K562 (cell line): ENCODE measurements at regions of chr6 and their contacts with region 1.

Region 1: DNA sequence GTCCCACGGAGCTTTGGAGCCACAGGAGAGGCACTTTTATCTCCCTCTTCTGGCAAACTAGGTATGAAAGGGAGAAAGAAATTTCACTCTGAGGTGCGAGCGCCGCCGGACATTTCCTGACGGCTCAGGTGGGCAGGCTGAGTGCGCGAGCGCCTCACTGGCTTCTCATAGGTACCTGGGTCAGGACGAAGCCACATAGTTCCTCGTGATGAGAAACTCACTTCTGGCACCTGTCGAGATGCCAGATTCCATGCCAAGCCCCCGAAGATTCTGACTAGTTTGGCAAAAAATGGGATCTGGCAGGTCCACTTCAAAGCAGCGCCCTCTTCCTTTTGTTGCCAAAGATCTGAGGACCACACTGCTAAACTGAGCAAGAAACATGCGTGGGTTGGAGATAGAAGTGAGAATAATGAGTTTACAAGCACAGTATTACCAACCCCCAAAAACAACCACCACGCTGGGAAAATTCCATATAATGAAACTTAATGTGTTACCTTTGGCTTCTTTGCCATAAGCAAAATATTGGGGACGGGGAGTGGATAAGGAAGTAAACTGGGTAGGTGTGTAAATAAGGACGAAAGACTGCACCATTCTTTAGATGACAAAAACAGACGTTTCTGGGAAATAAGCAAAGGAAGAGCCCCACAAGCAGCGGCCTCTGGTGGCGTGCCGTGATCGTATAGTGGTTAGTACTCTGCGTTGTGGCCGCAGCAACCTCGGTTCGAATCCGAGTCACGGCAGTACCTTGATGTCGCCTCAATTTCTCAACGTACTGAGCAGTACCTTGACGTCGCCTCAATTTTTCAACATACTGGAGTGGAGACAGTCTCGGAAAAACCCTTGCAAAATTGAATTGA is 89.8 kb upstream of the PRSS16 start:
- DNase-seq: peak; percentile 63 to 93 (median 70)
- ATAC-seq: peak; percentile 87
- H3K4me3 ChIP-seq: peak overlapping the region; percentile 54
- H3K27ac ChIP-seq: peak overlapping the region; percentile 46
- H3K4me1 ChIP-seq: peaks cover 10% of the 10 kb centered on the region in 2 experiments; a peak in 3 of 5 replicates
- H3K27me3 ChIP-seq: no peaks in the 10 kb centered on the region
- CTCF ChIP-seq: peak; percentile 73 to 77 (median 75)
- EP300 ChIP-seq: peak; percentile 49
- POLR2A ChIP-seq: 0 out of 2 replicates have a peak, but pooled peaks have one; percentile 12
- RAD21 ChIP-seq: peak; percentile 71 to 76

Region 2: DNA sequence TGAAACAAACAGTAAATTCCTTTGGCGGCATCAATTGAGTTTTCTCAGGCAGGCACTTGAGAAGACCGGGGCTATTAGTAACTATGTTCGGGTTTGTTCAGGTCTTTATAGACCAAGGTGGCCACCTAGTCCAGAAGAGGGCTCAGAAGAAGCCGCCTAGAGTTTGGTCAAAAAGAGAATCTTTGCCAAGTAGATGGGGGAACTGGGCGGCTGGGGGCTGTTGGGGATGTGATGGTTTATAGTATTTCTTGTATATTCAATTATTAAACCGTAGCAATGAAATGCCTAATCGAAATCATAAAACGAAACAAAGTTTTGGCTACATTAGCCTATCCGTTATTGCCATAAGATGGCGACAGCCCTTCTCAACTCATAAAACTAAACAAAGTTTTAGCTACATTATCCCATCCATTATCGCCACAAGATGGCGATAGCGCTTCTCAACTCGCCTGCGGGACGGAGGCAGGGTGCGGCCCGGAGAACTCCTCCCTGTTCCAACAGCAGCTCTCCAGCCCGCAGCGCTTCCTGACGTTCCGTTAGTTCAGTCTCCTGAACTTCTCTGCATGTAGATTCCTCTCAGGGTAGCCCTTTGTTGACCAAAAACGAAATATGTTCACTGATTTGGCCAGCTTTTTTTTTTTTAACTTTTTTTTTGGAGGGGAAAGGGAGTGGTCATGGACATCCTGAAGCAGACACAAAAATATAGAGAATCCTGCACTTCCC is 30.7 kb before region 1 on chr6:
- CTCF ChIA-PET with region 1: interaction called, 16 read pairs
- POLR2A ChIA-PET with region 1: interaction called, 6 read pairs
- in situ Hi-C with region 1: no loop called
- intact Hi-C with region 1: loop called (anchors 1 kb)
- DNase-seq: peak; percentile 76 to 97 (median 78)
- ATAC-seq: peak; percentile 77
- H3K4me3 ChIP-seq: peak overlapping the region; percentile 26
- H3K27ac ChIP-seq: peak overlapping the region; percentile 66
- H3K4me1 ChIP-seq: peaks cover 0 to 3% of the 10 kb centered on the region in 2 experiments; a peak in 2 of 5 replicates
- H3K27me3 ChIP-seq: no peaks in the 10 kb centered on the region
- CTCF ChIP-seq: peak; percentile 95 to 99 (median 97)
- EP300 ChIP-seq: no peak
- POLR2A ChIP-seq: peak; percentile 52; the same call in 1 of the 2 replicates
- RAD21 ChIP-seq: peak; percentile 91 to 94

Region 3: GRCh38 chr6:27146706-27147505 is 10.8 kb before region 1 on chr6:
- CTCF ChIA-PET with region 1: interaction called, 4 read pairs
- POLR2A ChIA-PET with region 1: interaction called, 69 read pairs
- in situ Hi-C with region 1: no loop called
- intact Hi-C with region 1: loop called (anchors 1 kb)
- DNase-seq: peak; percentile 93 to 99 (median 98)
- ATAC-seq: peak; percentile 68
- H3K4me3 ChIP-seq: peak overlapping the region; percentile 71
- H3K27ac ChIP-seq: peak overlapping the region; percentile 94
- H3K4me1 ChIP-seq: peaks cover 4 to 13% of the 10 kb centered on the region in 2 experiments
- H3K27me3 ChIP-seq: no peaks in the 10 kb centered on the region
- CTCF ChIP-seq: no peak
- EP300 ChIP-seq: no peak; the same call in 1 of the 2 replicates
- POLR2A ChIP-seq: peak; percentile 100
- RAD21 ChIP-seq: no peak; a peak in 1 of 4 replicates

Region 4: DNA sequence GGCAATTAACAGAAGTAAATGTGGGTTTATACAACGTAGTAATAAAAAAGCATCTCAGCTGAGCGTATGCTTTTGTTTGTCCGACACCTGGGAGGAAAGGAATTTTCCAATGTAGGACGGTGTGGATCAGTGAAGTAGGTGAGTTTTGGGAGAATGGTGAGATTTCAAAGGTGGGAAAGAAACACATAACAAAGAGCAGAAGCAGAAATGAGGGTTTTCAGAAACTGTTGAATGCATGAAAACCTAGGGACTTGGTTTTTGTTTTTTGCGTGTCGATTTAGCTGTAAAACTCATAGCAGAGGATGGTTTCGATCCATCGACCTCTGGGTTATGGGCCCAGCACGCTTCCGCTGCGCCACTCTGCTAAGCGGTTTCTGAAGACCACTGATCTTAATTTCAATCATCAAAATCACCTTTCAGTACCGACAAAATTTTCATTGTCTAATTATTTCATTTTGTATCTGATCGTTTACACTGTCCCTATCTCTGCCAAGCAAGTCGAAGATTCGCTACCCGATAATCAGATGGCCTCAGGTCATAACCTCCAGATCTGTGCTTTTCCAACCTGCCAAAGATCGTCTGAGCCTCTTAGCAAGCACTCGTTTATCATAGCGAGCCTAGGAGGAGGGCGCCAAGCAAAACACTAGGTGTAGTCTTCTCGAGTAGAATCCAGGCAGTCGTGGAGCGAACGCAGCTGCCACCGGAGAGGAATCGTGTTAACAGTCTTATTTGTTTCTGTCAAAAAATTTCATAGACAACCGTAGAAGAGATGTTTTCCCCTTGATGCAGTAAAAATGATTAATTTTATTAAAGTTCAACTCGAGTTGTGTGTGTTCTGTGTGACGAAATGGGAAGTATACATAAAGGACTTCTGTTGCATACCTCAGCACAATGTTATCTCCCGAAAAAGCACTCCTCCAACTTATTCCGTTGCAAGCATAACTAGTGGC is 175.3 kb after region 1 on chr6:
- CTCF ChIA-PET with region 1: no interaction called
- POLR2A ChIA-PET with region 1: no interaction called
- in situ Hi-C with region 1: no loop called
- intact Hi-C with region 1: no loop called
- DNase-seq: peak; percentile 67 to 91 (median 78)
- ATAC-seq: peak; percentile 92
- H3K4me3 ChIP-seq: peak overlapping the region; percentile 64
- H3K27ac ChIP-seq: peak overlapping the region; percentile 82
- H3K4me1 ChIP-seq: peaks cover 0 to 5% of the 10 kb centered on the region in 2 experiments; a peak in 2 of 5 replicates
- H3K27me3 ChIP-seq: no peaks in the 10 kb centered on the region
- CTCF ChIP-seq: peak in 1 of 3 experiments; percentile 18; a peak in 1 of 6 replicates
- EP300 ChIP-seq: peak; percentile 71
- POLR2A ChIP-seq: no peak
- RAD21 ChIP-seq: no peak; a peak in 2 of 4 replicates

Region 5: DNA sequence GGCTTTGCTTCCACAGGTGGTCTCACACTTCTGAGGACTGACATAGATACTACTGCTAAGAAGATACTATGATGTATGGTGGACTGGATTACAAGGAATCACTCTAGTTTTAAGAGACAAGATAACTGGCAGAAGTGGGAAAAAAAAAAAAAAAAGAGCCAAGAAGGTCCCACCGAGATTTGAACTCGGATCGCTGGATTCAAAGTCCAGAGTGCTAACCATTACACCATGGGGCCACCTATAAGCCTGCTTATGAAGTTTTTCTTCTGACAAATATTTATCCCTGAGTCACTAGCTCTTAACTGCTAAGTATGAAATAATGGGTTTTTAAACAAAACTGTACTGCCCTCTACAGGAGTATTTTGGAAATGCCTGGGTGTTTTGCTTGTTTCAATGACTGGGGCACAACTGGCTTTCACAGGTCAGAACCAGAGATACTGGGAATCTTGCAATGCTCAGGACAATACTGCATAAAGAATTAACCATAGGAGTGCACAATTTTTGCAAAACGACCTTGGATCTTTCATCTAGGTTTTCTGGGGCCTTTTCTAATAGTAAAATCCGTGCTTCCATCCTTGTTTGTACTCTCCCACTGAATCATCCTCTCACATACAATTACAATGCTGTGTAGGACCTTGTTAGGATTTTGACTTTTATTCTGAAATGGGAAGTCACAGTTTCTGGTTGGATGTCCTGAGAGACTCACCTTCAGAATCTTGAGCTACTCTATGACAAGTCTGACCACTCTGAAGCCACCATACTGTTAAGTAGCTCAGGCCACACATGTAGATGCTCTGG is 638.2 kb after region 1 on chr6:
- CTCF ChIA-PET with region 1: interaction called, 3 read pairs
- POLR2A ChIA-PET with region 1: no interaction called
- in situ Hi-C with region 1: no loop called
- intact Hi-C with region 1: loop called (anchors 1 kb)
- DNase-seq: peak; percentile 66 to 93 (median 74)
- ATAC-seq: peak; percentile 53
- H3K4me3 ChIP-seq: no peak overlapping the region
- H3K27ac ChIP-seq: peak overlapping the region; percentile 2; the same call in 1 of the 3 replicates
- H3K4me1 ChIP-seq: peaks cover 13 to 55% of the 10 kb centered on the region in 2 experiments
- H3K27me3 ChIP-seq: no peaks in the 10 kb centered on the region
- CTCF ChIP-seq: peak; percentile 70 to 95 (median 88); a peak in 5 of 6 replicates
- EP300 ChIP-seq: peak; percentile 81
- POLR2A ChIP-seq: no peak
- RAD21 ChIP-seq: peak; percentile 82 to 89